Naive thymus-derived CD4-positive, alpha-beta T cell (primary cell): ENCODE measurements at regions of chr1 and their contacts with region 1.

Region 1: GRCh38 chr1:23367791-23368561 is 1.7 kb downstream of the ZNF436 start:
- DNase-seq: peak; percentile 84 to 98 (median 96)
- ATAC-seq: peak; percentile 95
- H3K4me3 ChIP-seq: peak overlapping the region; percentile 100
- H3K4me3 Mint-ChIP-seq: peak overlapping the region; percentile 87 to 100 (median 97)
- H3K27ac ChIP-seq: peak overlapping the region; percentile 91
- H3K27ac Mint-ChIP-seq: peak overlapping the region; percentile 93 to 99 (median 97)
- H3K4me1 ChIP-seq: peaks cover 6 to 8% of the 10 kb centered on the region in 2 donors
- H3K4me1 Mint-ChIP-seq: peaks cover 25 to 41% (median 36%) of the 10 kb centered on the region in 7 donors
- H3K27me3 ChIP-seq: no peaks in the 10 kb centered on the region
- H3K27me3 Mint-ChIP-seq: no peaks in the 10 kb centered on the region

Region 2: DNA sequence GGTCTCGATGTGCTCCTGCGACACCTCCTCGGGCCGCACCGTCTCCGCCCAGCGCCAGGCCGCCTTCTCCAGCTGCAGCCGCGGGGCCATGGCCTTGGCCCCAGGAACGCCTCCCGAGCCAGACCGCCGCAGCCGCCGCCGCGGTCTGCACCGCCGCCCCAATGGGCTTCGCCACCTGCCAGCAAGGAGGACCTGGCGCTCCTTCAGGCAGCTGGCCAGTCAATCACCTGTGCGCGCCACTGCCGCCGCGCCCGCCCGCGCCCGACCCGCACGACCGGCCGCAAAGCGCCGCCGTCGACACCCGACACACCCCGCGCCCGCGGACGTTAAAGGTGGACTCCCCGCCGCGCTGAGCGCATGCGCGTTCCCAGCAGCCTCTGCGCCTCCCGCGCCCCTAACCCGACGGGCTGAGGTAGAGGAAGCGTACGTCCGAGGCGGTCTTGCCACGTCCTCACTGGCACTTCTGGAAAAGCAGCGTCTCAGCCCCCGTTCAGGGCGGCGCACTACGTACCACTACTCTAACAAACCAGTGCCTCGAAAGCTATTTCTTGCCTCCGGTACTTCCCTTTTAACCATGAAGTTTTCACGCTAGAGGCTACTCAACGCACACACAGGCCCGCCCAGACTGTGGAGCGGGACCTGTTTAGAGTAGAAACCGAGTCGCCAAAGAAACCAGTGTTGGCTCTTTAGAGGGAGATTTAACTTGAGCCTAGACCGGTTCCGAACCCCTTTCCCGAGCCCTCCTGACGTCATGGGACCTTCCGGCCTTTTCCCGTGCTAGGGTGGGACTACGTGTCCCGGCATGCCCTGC is 1584.9 kb before region 1 on chr1 and contains the start of gene USP48:
- CTCF ChIA-PET with region 1: no interaction called
- POLR2A ChIA-PET with region 1: no interaction called
- intact Hi-C with region 1: loop called in 1 of 2 experiments (anchors 2 kb)
- DNase-seq: peak; percentile 95 to 98 (median 97)
- ATAC-seq: peak; percentile 92
- H3K4me3 ChIP-seq: peak within 1 kb of the TSS; percentile 93
- H3K4me3 Mint-ChIP-seq: peak within 1 kb of the TSS; percentile 92 to 99 (median 98)
- H3K27ac ChIP-seq: peak within 1 kb of the TSS; percentile 99
- H3K27ac Mint-ChIP-seq: peak within 1 kb of the TSS; percentile 99 to 100 (median 100)
- H3K4me1 ChIP-seq: peaks cover 19 to 23% of the 10 kb centered on the region in 2 donors
- H3K4me1 Mint-ChIP-seq: peaks cover 19 to 40% (median 34%) of the 10 kb centered on the region in 7 donors
- H3K27me3 ChIP-seq: no peaks in the 10 kb centered on the region
- H3K27me3 Mint-ChIP-seq: peaks cover 0 to 9% (median 0%) of the 10 kb centered on the region in 5 donors
- total RNA-seq, gene USP48: 74.7 to 107 (median 83.9) TPM

Region 3: GRCh38 chr1:22880174-22880601 is 487.8 kb before region 1 on chr1:
- CTCF ChIA-PET with region 1: no interaction called
- POLR2A ChIA-PET with region 1: no interaction called
- intact Hi-C with region 1: no loop called
- DNase-seq: no peak
- ATAC-seq: peak; percentile 20
- H3K4me3 ChIP-seq: no peak overlapping the region
- H3K4me3 Mint-ChIP-seq: no peak overlapping the region
- H3K27ac ChIP-seq: no peak overlapping the region
- H3K27ac Mint-ChIP-seq: no peak overlapping the region
- H3K4me1 ChIP-seq: peaks cover 0 to 8% of the 10 kb centered on the region in 2 donors
- H3K4me1 Mint-ChIP-seq: peaks cover 6 to 11% (median 8%) of the 10 kb centered on the region in 7 donors
- H3K27me3 ChIP-seq: no peaks in the 10 kb centered on the region
- H3K27me3 Mint-ChIP-seq: peaks cover 0 to 9% (median 0%) of the 10 kb centered on the region in 5 donors

Region 4: GRCh38 chr1:23168457-23169194 is 199.3 kb before region 1 on chr1 and contains the start of gene LUZP1:
- CTCF ChIA-PET with region 1: no interaction called
- POLR2A ChIA-PET with region 1: no interaction called
- intact Hi-C with region 1: loop called (anchors 1 to 2 kb)
- DNase-seq: peak; percentile 73 to 91 (median 84)
- ATAC-seq: peak; percentile 96
- H3K4me3 ChIP-seq: peak within 1 kb of the TSS; percentile 90
- H3K4me3 Mint-ChIP-seq: peak within 1 kb of the TSS; percentile 84 to 99 (median 96)
- H3K27ac ChIP-seq: peak within 1 kb of the TSS; percentile 84
- H3K27ac Mint-ChIP-seq: peak within 1 kb of the TSS; percentile 57 to 94 (median 87)
- H3K4me1 ChIP-seq: peaks cover 7 to 16% of the 10 kb centered on the region in 2 donors
- H3K4me1 Mint-ChIP-seq: peaks cover 18 to 48% (median 38%) of the 10 kb centered on the region in 7 donors
- H3K27me3 ChIP-seq: no peaks in the 10 kb centered on the region
- H3K27me3 Mint-ChIP-seq: peaks cover 0 to 4% (median 0%) of the 10 kb centered on the region in 5 donors
- total RNA-seq, gene LUZP1: 14.8 to 22.9 (median 16.9) TPM

Region 5: GRCh38 chr1:23422241-23423030 is 54.5 kb after region 1 on chr1:
- CTCF ChIA-PET with region 1: no interaction called
- POLR2A ChIA-PET with region 1: interaction called, 8 read pairs
- intact Hi-C with region 1: loop called (anchors 1 to 2 kb)
- DNase-seq: peak in 8 of 9 donors; percentile 40 to 73 (median 66)
- ATAC-seq: peak; percentile 74
- H3K4me3 ChIP-seq: peak overlapping the region; percentile 59
- H3K4me3 Mint-ChIP-seq: peak overlapping the region; percentile 74 to 96 (median 92)
- H3K27ac ChIP-seq: peak overlapping the region; percentile 65
- H3K27ac Mint-ChIP-seq: peak overlapping the region; percentile 58 to 96 (median 91)
- H3K4me1 ChIP-seq: peaks cover 10 to 20% of the 10 kb centered on the region in 2 donors
- H3K4me1 Mint-ChIP-seq: peaks cover 18 to 45% (median 37%) of the 10 kb centered on the region in 7 donors
- H3K27me3 ChIP-seq: no peaks in the 10 kb centered on the region
- H3K27me3 Mint-ChIP-seq: peaks cover 0 to 36% (median 0%) of the 10 kb centered on the region in 5 donors

Region 6: GRCh38 chr1:23539698-23540266 is 171.8 kb after region 1 on chr1:
- CTCF ChIA-PET with region 1: no interaction called
- POLR2A ChIA-PET with region 1: no interaction called
- intact Hi-C with region 1: loop called in 1 of 2 experiments (anchors 2 kb)
- DNase-seq: peak; percentile 73 to 93 (median 91)
- ATAC-seq: peak; percentile 98
- H3K4me3 ChIP-seq: no peak overlapping the region
- H3K4me3 Mint-ChIP-seq: peak overlapping the region in 9 of 10 donors; percentile 35 to 66 (median 53)
- H3K27ac ChIP-seq: no peak overlapping the region
- H3K27ac Mint-ChIP-seq: peak overlapping the region; percentile 43 to 85 (median 73)
- H3K4me1 ChIP-seq: peaks cover 10 to 11% of the 10 kb centered on the region in 2 donors
- H3K4me1 Mint-ChIP-seq: peaks cover 3 to 23% (median 17%) of the 10 kb centered on the region in 7 donors
- H3K27me3 ChIP-seq: no peaks in the 10 kb centered on the region
- H3K27me3 Mint-ChIP-seq: no peaks in the 10 kb centered on the region

Region 7: DNA sequence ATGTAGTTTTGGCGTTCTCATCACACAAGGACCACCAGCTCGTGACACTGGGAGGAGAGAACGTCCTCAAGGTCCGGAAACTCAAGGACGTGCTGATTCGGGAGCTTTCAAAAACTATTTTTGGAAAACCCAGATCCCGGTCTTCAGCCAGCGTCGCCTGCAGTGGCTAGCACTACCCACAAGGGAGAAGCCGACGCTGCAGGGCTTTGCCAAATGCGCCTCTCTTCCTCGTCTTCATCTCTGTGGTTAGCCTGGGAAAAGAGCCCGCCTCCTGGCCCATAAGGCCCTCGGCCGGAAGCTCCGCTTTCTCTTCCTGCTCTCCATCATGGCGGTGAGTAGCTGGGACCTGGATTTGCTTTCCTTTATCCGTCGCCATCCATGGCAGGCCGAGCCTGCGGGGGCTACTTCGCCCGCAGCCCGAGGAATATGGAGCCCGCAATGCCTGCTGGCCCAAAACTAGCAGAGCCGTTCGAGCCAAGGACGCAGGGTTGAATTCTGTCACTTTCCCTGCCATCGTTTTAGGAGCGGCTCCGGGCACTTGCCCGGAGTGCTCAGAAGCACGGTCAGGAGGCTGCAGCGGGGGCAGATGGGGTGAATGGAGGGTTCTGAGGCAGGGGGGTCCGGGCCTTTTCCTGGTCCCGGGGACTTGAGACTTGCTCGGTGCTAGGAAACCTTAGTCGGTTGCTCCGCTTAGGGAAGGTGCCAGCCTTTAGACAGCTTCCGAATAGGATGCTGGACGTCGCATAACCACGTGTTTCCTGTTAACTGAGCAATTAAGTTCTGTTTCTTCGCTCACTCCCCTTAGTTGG is 323.7 kb after region 1 on chr1 and contains the start of gene RPL11:
- CTCF ChIA-PET with region 1: no interaction called
- POLR2A ChIA-PET with region 1: interaction called, 4 read pairs
- intact Hi-C with region 1: loop called (anchors 1 to 2 kb)
- DNase-seq: peak; percentile 60 to 92 (median 88)
- ATAC-seq: peak; percentile 100
- H3K4me3 ChIP-seq: peak within 1 kb of the TSS; percentile 82
- H3K4me3 Mint-ChIP-seq: peak within 1 kb of the TSS; percentile 87 to 96 (median 94)
- H3K27ac ChIP-seq: peak within 1 kb of the TSS; percentile 88
- H3K27ac Mint-ChIP-seq: peak within 1 kb of the TSS; percentile 87 to 97 (median 93)
- H3K4me1 ChIP-seq: peaks cover 19 to 20% of the 10 kb centered on the region in 2 donors
- H3K4me1 Mint-ChIP-seq: peaks cover 33 to 50% (median 45%) of the 10 kb centered on the region in 7 donors
- H3K27me3 ChIP-seq: no peaks in the 10 kb centered on the region
- H3K27me3 Mint-ChIP-seq: no peaks in the 10 kb centered on the region
- total RNA-seq, gene RPL11: 1,206 to 2,420 (median 2,172) TPM

Region 8: GRCh38 chr1:23959041-23959460 is 591.1 kb after region 1 on chr1:
- CTCF ChIA-PET with region 1: no interaction called
- POLR2A ChIA-PET with region 1: interaction called, 4 read pairs
- intact Hi-C with region 1: loop called in 1 of 2 experiments (anchors 1 kb)
- DNase-seq: peak; percentile 60 to 96 (median 92)
- ATAC-seq: peak; percentile 89
- H3K4me3 ChIP-seq: peak overlapping the region; percentile 72
- H3K4me3 Mint-ChIP-seq: peak overlapping the region; percentile 93 to 100 (median 99)
- H3K27ac ChIP-seq: peak overlapping the region; percentile 95
- H3K27ac Mint-ChIP-seq: peak overlapping the region; percentile 98 to 100 (median 100)
- H3K4me1 ChIP-seq: peaks cover 23 to 25% of the 10 kb centered on the region in 2 donors
- H3K4me1 Mint-ChIP-seq: peaks cover 31 to 83% (median 57%) of the 10 kb centered on the region in 7 donors
- H3K27me3 ChIP-seq: no peaks in the 10 kb centered on the region
- H3K27me3 Mint-ChIP-seq: no peaks in the 10 kb centered on the region